ENCODE measurements at regions of chr11 and their contacts with region 1.

Region 1: GRCh38 chr11:19076744-19077589 is 16.4 kb upstream of the MRGPRX2 start:
- H3K4me3 ChIP-seq: no peak overlapping the region
- H3K27ac ChIP-seq: no peak overlapping the region
- H3K4me1 ChIP-seq: no peaks in the 10 kb centered on the region
- CTCF ChIP-seq: no peak

Region 2: GRCh38 chr11:19032990-19033389 is 44.0 kb before region 1 on chr11:
- CTCF ChIA-PET with region 1: no interaction called
- POLR2A ChIA-PET with region 1: no interaction called
- H3K4me3 ChIP-seq: no peak overlapping the region
- H3K27ac ChIP-seq: no peak overlapping the region
- H3K4me1 ChIP-seq: no peaks in the 10 kb centered on the region
- CTCF ChIP-seq: no peak

Region 3: GRCh38 chr11:19087658-19088057 is 10.7 kb after region 1 on chr11:
- CTCF ChIA-PET with region 1: interaction called, 16 read pairs
- POLR2A ChIA-PET with region 1: no interaction called
- H3K4me3 ChIP-seq: no peak overlapping the region
- H3K27ac ChIP-seq: no peak overlapping the region
- H3K4me1 ChIP-seq: no peaks in the 10 kb centered on the region
- CTCF ChIP-seq: no peak

Region 4: GRCh38 chr11:19093976-19094375 is 17.0 kb after region 1 on chr11:
- CTCF ChIA-PET with region 1: interaction called, 12 read pairs
- POLR2A ChIA-PET with region 1: no interaction called
- H3K4me3 ChIP-seq: no peak overlapping the region
- H3K27ac ChIP-seq: no peak overlapping the region
- H3K4me1 ChIP-seq: peaks cover 3% of the 10 kb centered on the region; the same call in 1 of the 2 replicates
- CTCF ChIP-seq: no peak

Region 5: DNA sequence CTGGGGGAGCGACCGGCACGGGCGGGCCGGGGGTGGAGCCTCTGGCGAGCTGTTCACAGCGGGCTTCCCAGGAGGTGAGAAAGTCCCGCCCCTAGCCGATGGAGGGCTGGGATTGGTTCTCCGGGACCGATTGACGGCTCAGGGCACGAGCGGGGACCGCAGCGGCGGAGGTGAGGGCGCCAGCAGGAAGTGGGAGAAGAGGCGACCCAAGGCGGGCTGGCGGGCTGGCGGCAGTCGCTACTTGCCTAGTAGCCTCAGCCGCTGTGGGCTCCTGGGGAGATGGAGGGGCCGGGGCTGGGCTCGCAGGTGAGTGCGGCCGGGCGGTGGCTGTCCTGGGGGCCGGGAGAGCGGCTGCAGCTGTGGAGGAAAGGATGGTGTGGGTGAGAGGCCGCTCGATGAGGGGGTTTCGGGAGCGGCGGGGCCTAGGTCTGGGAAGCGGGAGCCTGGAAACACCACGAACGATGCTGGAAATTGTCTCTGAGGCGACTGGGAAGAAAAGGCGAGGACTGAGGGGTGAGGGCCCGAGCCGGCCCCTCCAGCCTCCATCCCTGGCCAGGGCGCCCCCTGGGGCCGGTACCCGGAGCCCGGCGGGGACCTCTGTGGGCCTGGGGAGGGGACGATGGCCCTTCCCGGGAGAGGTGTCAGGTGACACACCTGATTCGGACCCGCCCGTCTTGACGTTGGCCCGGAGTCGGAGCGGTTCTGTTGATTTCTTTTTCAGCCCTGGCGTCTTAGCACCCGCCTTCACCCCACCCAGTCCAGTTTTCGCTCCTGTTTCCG is 40.2 kb after region 1 on chr11 and contains the start of gene ZDHHC13:
- CTCF ChIA-PET with region 1: interaction called, 13 read pairs
- POLR2A ChIA-PET with region 1: no interaction called
- H3K4me3 ChIP-seq: peak within 1 kb of the TSS; percentile 97
- H3K27ac ChIP-seq: peak within 1 kb of the TSS; percentile 58; the same call in 1 of the 2 replicates
- H3K4me1 ChIP-seq: no peaks in the 10 kb centered on the region
- CTCF ChIP-seq: peak; percentile 70